CD8-positive, alpha-beta T cell (primary cell): ENCODE measurements at regions of chr15 and their contacts with region 1.

Region 1: GRCh38 chr15:74799856-74800547 is 12.6 kb upstream of the LMAN1L start:
- DNase-seq: peak; percentile 74 to 94 (median 87)
- ATAC-seq: peak; percentile 95
- H3K4me3 ChIP-seq: no peak overlapping the region
- H3K4me3 Mint-ChIP-seq: peak overlapping the region; percentile 42
- H3K27ac ChIP-seq: peak overlapping the region; percentile 36 to 94
- H3K27ac Mint-ChIP-seq: peak overlapping the region; percentile 92
- H3K4me1 ChIP-seq: peaks cover 56% of the 10 kb centered on the region
- H3K4me1 Mint-ChIP-seq: peaks cover 56% of the 10 kb centered on the region
- H3K27me3 ChIP-seq: no peaks in the 10 kb centered on the region
- H3K27me3 Mint-ChIP-seq: no peaks in the 10 kb centered on the region
- CTCF ChIP-seq: peak; percentile 92

Region 2: GRCh38 chr15:74787251-74788041 is 12.6 kb before region 1 on chr15:
- CTCF ChIA-PET with region 1: interaction called, 1,956 read pairs
- POLR2A ChIA-PET with region 1: interaction called, 512 read pairs
- intact Hi-C with region 1: loop called in 1 of 2 experiments (anchors 1 kb)
- DNase-seq: peak; percentile 81 to 97 (median 92)
- ATAC-seq: peak; percentile 71
- H3K4me3 ChIP-seq: peak overlapping the region; percentile 83 to 98
- H3K4me3 Mint-ChIP-seq: peak overlapping the region; percentile 83
- H3K27ac ChIP-seq: peak overlapping the region; percentile 53 to 90
- H3K27ac Mint-ChIP-seq: peak overlapping the region; percentile 92
- H3K4me1 ChIP-seq: peaks cover 76% of the 10 kb centered on the region
- H3K4me1 Mint-ChIP-seq: peaks cover 71% of the 10 kb centered on the region
- H3K27me3 ChIP-seq: no peaks in the 10 kb centered on the region
- H3K27me3 Mint-ChIP-seq: no peaks in the 10 kb centered on the region
- CTCF ChIP-seq: peak; percentile 62

Region 3: GRCh38 chr15:74863239-74864056 is 63.4 kb after region 1 on chr15:
- CTCF ChIA-PET with region 1: no interaction called
- POLR2A ChIA-PET with region 1: no interaction called
- intact Hi-C with region 1: no loop called
- DNase-seq: peak in 1 of 9 experiments; percentile 25
- ATAC-seq: peak; percentile 49
- H3K4me3 ChIP-seq: no peak overlapping the region
- H3K4me3 Mint-ChIP-seq: peak overlapping the region; percentile 3
- H3K27ac ChIP-seq: peak overlapping the region in 1 of 2 experiments; percentile 52
- H3K27ac Mint-ChIP-seq: peak overlapping the region; percentile 85
- H3K4me1 ChIP-seq: peaks cover 62% of the 10 kb centered on the region
- H3K4me1 Mint-ChIP-seq: peaks cover 66% of the 10 kb centered on the region
- H3K27me3 ChIP-seq: no peaks in the 10 kb centered on the region
- H3K27me3 Mint-ChIP-seq: no peaks in the 10 kb centered on the region
- CTCF ChIP-seq: no peak